Ovary (tissue), 10 donors: ENCODE measurements at regions of chr16 and their contacts with region 1.

Region 1: GRCh38 chr16:11977376-11978041 is 975 bp downstream of the SNX29 start:
- DNase-seq: peak; percentile 29 to 63 (median 38)
- H3K4me3 ChIP-seq: peak overlapping the region; percentile 97
- H3K27ac ChIP-seq: peak overlapping the region; percentile 5 to 32
- H3K4me1 ChIP-seq: peaks cover 7% of the 10 kb centered on the region
- H3K27me3 ChIP-seq: no peaks in the 10 kb centered on the region
- CTCF ChIP-seq: no peak
- EP300 ChIP-seq: no peak
- POLR2A ChIP-seq: no peak

Region 2: DNA sequence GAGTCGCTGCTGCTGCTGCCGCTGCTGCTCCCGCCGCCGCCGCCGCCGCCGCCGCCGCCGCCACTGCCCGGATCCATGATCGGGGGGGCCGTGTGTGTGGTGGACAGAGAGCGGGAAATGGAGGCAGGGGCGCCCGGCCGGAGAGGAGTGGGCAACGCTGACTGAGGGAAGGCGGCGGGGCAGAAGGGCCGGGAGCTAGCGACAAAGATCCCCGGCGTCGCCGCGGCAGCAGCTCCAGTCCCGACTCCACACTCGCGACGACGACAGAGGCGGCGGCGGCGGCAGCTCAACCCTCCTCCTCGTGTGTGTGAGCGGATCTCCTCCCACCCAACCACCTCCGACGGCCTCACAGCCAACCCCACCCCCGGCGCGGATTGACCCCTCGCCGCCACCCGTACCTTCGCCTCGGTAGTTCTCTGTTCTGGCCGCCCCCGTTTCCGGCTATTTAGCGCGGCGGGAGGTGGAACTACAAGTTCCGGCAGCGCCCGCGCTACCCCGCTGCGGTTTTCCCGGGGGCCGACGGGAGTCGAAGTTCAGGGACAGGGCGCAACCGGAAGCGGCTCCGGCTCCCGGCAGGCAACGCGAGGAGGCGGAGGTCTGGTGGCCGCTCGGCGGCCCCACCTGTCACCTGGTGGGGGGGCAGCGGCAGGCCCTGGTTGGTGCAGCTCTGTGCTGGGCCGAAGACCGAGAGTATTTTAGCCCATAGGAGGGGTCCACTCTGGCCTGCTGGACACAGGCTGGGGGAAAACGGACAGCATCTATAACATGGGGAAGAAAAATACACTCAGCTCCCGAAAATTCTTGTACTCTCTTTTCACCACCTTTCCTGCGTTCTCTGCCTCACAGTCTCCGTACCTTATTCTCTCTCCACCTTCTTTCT is 61.6 kb before region 1 on chr16 and contains the start of gene GSPT1:
- intact Hi-C with region 1: loop called in 1 of 4 experiments (anchors 10 kb)
- DNase-seq: peak; percentile 98 to 99 (median 99)
- H3K4me3 ChIP-seq: peak within 1 kb of the TSS; percentile 78
- H3K27ac ChIP-seq: peak within 1 kb of the TSS; percentile 78 to 87
- H3K4me1 ChIP-seq: peaks cover 5% of the 10 kb centered on the region
- H3K27me3 ChIP-seq: no peaks in the 10 kb centered on the region
- CTCF ChIP-seq: peak in 2 of 3 donors; percentile 36 to 69
- EP300 ChIP-seq: peak; percentile 50
- POLR2A ChIP-seq: peak; percentile 78
- total RNA-seq, gene GSPT1: 23.4 to 94.2 (median 74.8) TPM

Region 3: DNA sequence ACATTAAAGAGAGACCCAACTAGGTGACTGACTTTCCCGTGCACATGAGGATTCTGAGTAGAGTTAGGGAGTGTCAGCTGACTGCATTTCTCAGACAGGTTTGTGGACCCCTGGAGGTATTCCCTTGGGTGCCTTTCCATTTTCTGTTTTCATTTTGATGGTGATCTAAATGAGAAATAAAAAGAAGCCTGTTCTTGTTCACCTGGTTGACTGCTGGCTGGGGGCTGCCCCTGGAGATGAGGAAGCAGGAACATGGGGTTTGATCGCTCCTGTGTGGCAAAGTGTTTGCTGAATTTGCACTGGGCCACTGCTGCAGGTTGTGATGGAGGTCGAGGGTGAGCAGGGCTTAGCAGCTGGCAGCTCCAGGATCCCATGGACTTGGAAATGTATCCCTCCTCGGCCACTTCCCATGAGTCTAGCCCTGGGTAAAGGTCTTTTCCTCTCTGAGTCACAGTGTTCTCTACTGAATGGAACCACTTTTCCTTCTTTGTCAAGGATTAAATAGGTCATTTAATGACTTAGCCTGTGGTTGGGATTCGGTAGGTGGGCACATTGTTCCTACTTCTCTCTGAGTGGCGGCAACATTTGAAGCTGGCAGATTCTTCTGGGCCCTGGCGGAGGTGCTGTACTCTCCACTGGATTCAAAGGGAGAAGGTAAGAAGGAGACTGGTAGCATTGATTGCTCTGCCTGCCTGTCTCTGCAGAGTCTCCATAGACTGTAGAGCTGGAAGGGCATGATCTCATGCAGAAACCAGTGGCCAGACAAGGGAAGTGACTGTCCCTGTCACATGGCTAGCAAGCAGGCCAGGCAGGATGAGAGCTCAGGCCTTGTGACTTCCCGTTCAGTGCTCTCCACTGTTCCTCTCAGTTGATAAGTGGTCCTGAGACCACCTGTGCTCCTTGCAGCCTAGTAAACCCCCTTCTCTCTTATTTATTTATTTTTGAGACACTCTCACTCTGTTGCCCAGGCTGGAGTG is 16.9 kb after region 1 on chr16:
- intact Hi-C with region 1: no loop called
- DNase-seq: no peak
- H3K4me3 ChIP-seq: no peak overlapping the region
- H3K27ac ChIP-seq: no peak overlapping the region
- H3K4me1 ChIP-seq: no peaks in the 10 kb centered on the region
- H3K27me3 ChIP-seq: no peaks in the 10 kb centered on the region
- CTCF ChIP-seq: no peak
- EP300 ChIP-seq: no peak
- POLR2A ChIP-seq: no peak

Region 4: DNA sequence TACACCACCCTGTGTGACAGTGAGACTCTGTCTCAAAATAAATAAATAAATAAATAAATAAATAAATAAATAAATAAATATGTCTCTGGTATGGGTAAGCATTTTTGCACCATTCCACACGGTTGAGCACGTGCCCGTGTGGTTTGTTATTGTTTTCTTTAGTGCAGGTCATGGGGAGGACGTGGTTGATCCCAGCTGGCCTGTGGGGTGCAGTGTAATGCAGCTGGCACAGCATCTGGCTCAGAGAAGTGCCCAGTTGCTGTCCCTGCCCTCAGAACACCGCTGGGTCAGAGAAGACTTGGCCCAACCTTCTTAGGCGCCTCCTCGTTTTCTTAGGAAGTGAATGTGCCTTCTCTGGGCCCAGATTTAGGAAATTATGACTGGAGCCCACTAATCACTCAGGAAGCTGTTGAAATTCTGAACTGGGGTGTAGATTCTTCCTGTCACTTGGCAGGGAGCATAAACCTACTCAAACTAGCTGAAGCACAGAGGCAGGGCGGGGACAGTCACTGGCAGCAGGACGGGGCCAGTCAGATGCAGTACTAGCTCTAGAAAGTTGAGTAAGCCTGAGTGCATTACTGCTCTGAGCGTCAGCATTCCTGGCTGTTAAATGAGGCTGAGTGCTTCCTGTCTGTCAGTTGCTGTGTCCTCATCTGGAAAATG is 85.0 kb after region 1 on chr16:
- intact Hi-C with region 1: loop called in 3 of 4 experiments (anchors 5 to 10 kb)
- DNase-seq: peak in 2 of 5 donors; percentile 56 to 63
- H3K4me3 ChIP-seq: no peak overlapping the region
- H3K27ac ChIP-seq: no peak overlapping the region
- H3K4me1 ChIP-seq: peaks cover 18% of the 10 kb centered on the region
- H3K27me3 ChIP-seq: no peaks in the 10 kb centered on the region
- CTCF ChIP-seq: no peak
- EP300 ChIP-seq: peak; percentile 21
- POLR2A ChIP-seq: no peak

Region 5: GRCh38 chr16:12067714-12068401 is 90.3 kb after region 1 on chr16:
- intact Hi-C with region 1: loop called in 3 of 4 experiments (anchors 5 to 10 kb)
- DNase-seq: peak; percentile 29 to 76 (median 42)
- H3K4me3 ChIP-seq: no peak overlapping the region
- H3K27ac ChIP-seq: no peak overlapping the region
- H3K4me1 ChIP-seq: peaks cover 9% of the 10 kb centered on the region
- H3K27me3 ChIP-seq: no peaks in the 10 kb centered on the region
- CTCF ChIP-seq: peak; percentile 78 to 86 (median 81)
- EP300 ChIP-seq: no peak
- POLR2A ChIP-seq: no peak

Region 6: DNA sequence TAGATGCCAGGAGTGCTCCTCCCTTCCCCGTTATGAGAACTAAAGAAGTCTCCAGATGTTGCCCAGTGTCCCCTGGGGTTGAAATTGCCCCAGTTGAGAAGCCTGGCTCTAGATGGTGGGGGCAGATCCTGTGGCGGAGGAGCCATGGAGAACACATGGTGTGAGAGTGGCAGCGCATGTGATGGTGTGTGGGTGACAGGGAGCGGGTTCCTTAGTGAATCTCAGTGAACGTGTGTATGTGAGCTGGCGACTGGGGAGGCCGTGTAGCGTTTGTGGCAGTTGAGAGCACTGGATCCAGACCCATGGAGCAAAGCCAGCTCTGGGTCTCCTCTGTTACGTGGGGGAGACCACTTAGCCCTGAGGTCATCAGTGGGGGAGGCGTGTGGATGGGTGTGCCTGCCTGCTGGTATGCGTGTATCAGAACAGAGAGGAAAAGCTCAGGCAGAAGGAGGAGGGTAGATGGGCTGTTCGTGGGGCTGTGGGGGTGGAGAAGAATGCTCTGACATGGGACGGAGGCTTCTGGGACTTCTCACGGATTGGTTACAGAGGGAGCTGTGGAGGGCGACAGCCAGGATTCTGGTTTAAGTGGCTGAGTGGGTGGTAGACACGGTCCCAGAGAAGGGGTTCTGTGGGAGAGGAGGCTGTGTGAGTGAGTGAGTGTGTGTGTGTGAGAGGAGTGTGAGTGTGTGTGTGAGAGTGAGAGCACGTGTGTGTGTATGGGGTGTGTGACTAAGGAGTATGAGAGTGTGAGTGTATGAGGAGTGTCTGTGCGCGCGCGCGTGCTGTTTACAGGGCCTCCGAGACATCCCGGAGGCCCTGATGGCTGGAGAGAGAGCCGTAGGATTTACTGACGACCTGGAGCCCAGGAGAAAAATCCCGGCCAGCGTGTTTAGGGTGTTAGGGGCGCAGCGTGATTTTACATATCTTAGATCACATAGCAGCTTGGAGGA is 192.9 kb after region 1 on chr16:
- intact Hi-C with region 1: no loop called
- DNase-seq: no peak
- H3K4me3 ChIP-seq: no peak overlapping the region
- H3K27ac ChIP-seq: no peak overlapping the region
- H3K4me1 ChIP-seq: peaks cover 12% of the 10 kb centered on the region
- H3K27me3 ChIP-seq: no peaks in the 10 kb centered on the region
- CTCF ChIP-seq: no peak
- EP300 ChIP-seq: no peak
- POLR2A ChIP-seq: no peak